Caco-2 (cell line): ENCODE measurements at regions of chr1 and their contacts with region 1.

Region 1: DNA sequence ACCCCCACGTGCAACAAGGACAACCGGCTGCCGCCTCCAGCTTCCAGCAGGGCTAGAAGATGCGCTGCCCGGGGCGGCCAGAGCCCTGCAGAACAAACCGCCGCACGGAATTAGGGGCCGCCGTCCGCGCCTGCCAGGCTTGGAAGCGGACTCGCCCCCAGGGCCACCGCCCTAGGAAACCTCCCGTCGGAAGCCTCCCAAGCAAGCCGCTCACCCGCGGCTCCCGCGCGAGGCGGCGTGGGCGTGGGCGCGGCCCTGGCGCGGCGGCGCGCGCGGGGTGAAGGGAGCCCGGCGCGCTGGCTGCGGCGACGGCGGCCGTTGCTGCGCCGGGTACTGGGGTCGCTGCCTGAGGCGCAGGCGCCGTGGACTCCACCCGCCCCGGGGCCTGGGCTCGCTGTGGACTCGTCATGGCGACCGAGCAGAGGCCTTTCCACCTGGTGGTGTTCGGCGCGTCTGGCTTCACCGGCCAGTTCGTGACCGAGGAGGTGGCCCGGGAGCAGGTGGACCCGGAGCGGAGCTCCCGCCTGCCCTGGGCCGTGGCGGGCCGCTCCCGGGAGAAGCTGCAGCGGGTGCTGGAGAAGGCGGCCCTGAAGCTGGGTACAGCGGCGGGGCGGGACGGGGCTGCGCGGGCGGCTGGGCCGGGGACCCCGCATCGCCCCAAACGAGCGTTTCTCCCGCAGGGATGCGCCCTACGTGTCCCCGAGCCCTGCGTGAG is at the start of gene SCCPDH:
- DNase-seq: peak; percentile 74 to 81
- H3K4me3 ChIP-seq: peak within 1 kb of the TSS; percentile 61
- H3K4me3 Mint-ChIP-seq: peak within 1 kb of the TSS; percentile 78
- H3K27ac Mint-ChIP-seq: no peak within 1 kb of the TSS
- H3K4me1 ChIP-seq: no peaks in the 10 kb centered on the region
- H3K4me1 Mint-ChIP-seq: no peaks in the 10 kb centered on the region
- H3K27me3 ChIP-seq: no peaks in the 10 kb centered on the region
- H3K27me3 Mint-ChIP-seq: no peaks in the 10 kb centered on the region
- CTCF ChIP-seq: no peak
- total RNA-seq, gene SCCPDH: 26.1 and 28.7 TPM in 2 replicates

Region 2: DNA sequence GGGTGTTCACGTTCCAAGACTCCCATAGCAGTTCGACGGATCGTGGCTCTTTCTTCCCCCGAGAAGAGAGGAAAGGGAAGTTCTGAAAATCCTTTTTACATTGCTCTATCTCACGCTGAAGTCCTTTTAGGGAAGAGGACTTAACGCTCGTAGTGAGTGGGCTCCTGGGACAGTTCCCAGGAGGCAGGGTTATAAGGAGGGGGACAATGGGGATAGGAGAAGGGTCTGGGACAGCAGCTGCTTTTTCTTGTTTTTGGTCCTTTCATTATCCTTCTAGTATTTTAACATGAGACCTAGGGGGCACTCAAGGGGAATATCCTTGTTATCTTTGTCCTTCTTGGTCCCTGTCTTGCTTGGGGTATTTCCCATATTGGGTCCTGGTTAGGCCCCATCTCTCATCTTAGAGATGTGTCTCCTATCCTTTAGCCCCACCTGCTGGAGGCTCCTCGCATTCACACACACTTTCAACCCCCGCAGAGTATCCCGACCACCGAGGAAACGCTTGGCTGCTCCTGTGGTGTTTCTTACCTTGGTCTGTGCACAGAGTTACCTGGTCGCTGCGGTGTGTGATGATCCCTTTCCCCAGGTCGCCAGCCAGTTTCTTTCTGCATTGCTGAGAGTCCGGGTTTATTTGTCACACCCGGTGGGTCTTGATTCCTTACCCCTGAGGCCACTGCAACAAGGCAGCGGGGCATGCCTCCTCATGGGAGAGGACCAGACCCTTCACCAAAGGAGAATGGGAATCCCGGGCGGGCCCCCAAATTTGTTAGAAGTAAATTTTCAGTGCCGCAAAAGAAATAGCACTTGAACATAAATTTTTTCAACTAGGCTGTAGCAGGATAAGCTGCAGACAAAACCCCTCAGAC is 29.7 kb after region 1 on chr1:
- CTCF ChIA-PET with region 1: no interaction called
- POLR2A ChIA-PET with region 1: interaction called, 3 read pairs
- intact Hi-C with region 1: loop called (anchors 1 kb)
- DNase-seq: peak; percentile 70 to 83
- H3K4me3 ChIP-seq: no peak overlapping the region
- H3K4me3 Mint-ChIP-seq: no peak overlapping the region
- H3K27ac Mint-ChIP-seq: no peak overlapping the region
- H3K4me1 ChIP-seq: 0 out of 2 replicates have a peak, but pooled peaks cover 3% of the 10 kb centered on the region
- H3K4me1 Mint-ChIP-seq: peaks cover 8% of the 10 kb centered on the region
- H3K27me3 ChIP-seq: no peaks in the 10 kb centered on the region
- H3K27me3 Mint-ChIP-seq: no peaks in the 10 kb centered on the region
- CTCF ChIP-seq: peak; percentile 82 to 85

Region 3: GRCh38 chr1:246809473-246809872 is 85.3 kb after region 1 on chr1:
- CTCF ChIA-PET with region 1: no interaction called
- POLR2A ChIA-PET with region 1: no interaction called
- intact Hi-C with region 1: no loop called
- DNase-seq: no peak
- H3K4me3 ChIP-seq: no peak overlapping the region
- H3K4me3 Mint-ChIP-seq: no peak overlapping the region
- H3K27ac Mint-ChIP-seq: no peak overlapping the region
- H3K4me1 ChIP-seq: peaks cover 3% of the 10 kb centered on the region; the same call in 1 of the 2 replicates
- H3K4me1 Mint-ChIP-seq: peaks cover 9% of the 10 kb centered on the region
- H3K27me3 ChIP-seq: no peaks in the 10 kb centered on the region
- H3K27me3 Mint-ChIP-seq: no peaks in the 10 kb centered on the region
- CTCF ChIP-seq: no peak